ENCODE measurements at regions of chr2 and their contacts with region 1.

Region 1: GRCh38 chr2:222655787-222656525 is at the start of gene FARSB:
- DNase-seq: peak; percentile 92
- ATAC-seq: peak; percentile 98
- H3K4me3 ChIP-seq: peak within 1 kb of the TSS; percentile 94 to 99
- H3K27ac ChIP-seq: peak within 1 kb of the TSS; percentile 99
- H3K4me1 ChIP-seq: peaks cover 15% of the 10 kb centered on the region; the same call in 1 of the 2 replicates
- H3K27me3 ChIP-seq: no peaks in the 10 kb centered on the region
- CTCF ChIP-seq: no peak
- total RNA-seq, gene FARSB: 31.6 TPM

Region 2: DNA sequence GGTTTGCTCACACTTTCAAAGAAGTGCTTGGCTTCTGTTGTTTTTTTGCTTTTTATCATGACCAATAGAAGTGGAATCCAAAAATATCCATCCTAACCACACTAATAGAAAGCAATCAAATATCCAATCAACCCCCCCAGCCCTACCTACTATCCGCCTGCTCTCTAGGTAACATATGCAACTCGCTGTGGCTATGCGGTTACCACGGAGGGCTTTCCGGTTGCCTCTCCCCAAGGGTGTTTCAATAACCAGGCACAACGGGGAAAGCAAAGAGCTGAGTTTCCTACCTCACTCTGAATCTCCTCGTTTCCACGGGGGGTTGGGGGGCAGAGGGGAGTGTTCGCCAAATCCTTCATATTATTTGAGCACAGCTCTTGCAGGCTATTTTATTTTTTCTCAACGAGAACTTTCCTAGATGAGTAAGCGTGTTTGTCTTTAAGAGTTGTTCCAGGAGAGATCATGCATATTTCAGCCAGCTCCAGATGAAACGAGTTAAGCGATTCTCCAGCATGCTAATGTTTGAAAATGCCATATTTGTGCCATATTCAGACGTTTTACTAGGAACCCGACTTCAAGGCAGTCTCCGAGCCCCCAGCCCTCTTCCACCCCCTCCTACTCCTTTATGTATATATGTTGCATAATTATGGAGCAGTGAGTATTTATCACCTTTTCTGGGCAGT is 387.5 kb before region 1 on chr2:
- CTCF ChIA-PET with region 1: no interaction called
- POLR2A ChIA-PET with region 1: interaction called, 20 read pairs
- in situ Hi-C with region 1: no loop called
- intact Hi-C with region 1: no loop called
- DNase-seq: no peak
- ATAC-seq: no peak
- H3K4me3 ChIP-seq: no peak overlapping the region
- H3K27ac ChIP-seq: no peak overlapping the region
- H3K4me1 ChIP-seq: no peaks in the 10 kb centered on the region
- H3K27me3 ChIP-seq: peaks cover 3% of the 10 kb centered on the region; the same call in 1 of the 2 replicates
- CTCF ChIP-seq: no peak

Region 3: GRCh38 chr2:222903234-222904220 is 247.6 kb after region 1 on chr2:
- CTCF ChIA-PET with region 1: no interaction called
- POLR2A ChIA-PET with region 1: no interaction called
- in situ Hi-C with region 1: no loop called
- intact Hi-C with region 1: no loop called
- DNase-seq: no peak
- ATAC-seq: peak; percentile 81
- H3K4me3 ChIP-seq: no peak overlapping the region
- H3K27ac ChIP-seq: no peak overlapping the region
- H3K4me1 ChIP-seq: peaks cover 16% of the 10 kb centered on the region
- H3K27me3 ChIP-seq: no peaks in the 10 kb centered on the region
- CTCF ChIP-seq: peak; percentile 80

Measured in Panc1 (cell line).